Activated CD4-positive, alpha-beta T cell treated with anti-CD3 and anti-CD28 coated beads, Interleukin-2, amount 10 ng/mL, durations not matched to agents 24 days and 14 days (primary cell): ENCODE measurements at regions of chr10 and their contacts with region 1.

Region 1: DNA sequence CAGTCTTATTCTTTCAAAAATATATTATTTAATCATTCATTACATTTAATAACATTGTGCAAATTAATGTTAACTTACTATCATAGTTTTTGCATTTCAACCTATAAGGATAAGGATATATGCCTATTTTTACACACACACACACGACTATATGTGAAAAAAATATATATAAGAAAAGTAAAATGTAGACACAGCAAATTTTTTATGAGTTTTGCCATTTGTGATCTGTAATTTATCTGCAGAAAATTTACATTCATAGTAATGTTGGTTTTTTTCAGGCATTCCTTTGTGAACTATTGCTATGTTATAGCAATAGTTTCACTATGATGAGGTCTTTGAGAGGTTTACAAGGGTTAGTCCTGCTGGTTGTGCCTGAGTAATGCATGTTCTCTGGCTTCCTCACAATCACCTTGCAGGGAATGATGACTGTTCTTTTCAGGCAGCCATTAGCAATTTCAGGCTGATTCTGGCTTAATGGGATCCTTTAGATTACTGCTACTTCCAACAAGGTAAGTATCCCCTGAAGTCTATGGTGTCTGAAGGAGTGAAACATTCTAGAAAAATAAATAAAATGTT is 183.7 kb upstream of the CDK1 start:
- DNase-seq: no peak
- H3K4me3 Mint-ChIP-seq: no peak overlapping the region
- H3K27ac Mint-ChIP-seq: no peak overlapping the region
- H3K4me1 Mint-ChIP-seq: peaks cover 19% of the 10 kb centered on the region
- H3K27me3 Mint-ChIP-seq: no peaks in the 10 kb centered on the region

Region 2: GRCh38 chr10:60611291-60611747 is 16.8 kb after region 1 on chr10:
- intact Hi-C with region 1: loop called (anchors 2 kb)
- DNase-seq: peak; percentile 61
- H3K4me3 Mint-ChIP-seq: no peak overlapping the region
- H3K27ac Mint-ChIP-seq: peak overlapping the region; percentile 78
- H3K4me1 Mint-ChIP-seq: peaks cover 19% of the 10 kb centered on the region
- H3K27me3 Mint-ChIP-seq: no peaks in the 10 kb centered on the region